ENCODE measurements at regions of chr5 and their contacts with region 1.

Region 1: DNA sequence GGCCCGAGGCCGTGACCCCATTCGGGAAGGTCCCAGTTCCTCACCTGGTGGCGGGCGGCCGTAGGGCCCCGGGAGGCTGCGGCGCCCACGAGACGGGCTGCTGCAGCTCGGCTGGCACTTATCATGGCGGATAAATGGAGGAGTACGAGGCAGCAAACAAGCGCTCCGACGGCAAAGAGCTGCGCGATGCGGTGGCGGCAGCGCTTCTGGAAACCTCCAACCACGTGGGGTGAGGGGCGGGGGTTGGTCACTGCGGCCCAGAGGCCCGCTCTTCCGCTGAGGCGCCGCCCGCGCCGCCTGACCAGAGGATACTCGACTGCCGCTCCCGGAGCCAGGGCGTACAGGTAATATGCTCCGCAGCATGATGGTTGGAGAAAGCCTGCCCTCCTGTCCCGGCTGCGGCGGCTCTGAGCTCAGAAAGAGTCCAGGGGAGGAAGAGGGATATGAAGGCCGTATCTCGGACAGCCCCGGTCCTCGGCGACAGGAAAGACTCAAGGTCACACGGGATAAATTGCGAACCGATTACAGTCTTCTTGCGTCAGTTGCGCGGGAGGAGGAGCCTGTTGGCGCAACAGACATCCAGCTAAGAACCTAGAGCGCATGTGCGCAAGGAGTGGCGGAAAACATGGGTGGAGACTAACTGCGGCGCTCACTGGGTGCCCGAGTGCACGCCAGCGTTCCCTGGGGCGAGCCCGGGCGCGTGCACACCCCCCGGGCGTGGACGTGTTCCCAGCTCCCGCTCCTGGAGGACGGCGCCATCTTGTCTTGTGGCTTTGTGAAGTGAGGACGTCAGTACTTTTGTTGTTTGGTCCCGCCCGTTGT is at the start of gene HSPA9:
- DNase-seq: peak; percentile 98
- H3K4me3 Mint-ChIP-seq: peak within 1 kb of the TSS; percentile 99
- H3K27ac Mint-ChIP-seq: peak within 1 kb of the TSS; percentile 98
- H3K4me1 Mint-ChIP-seq: peaks cover 35% of the 10 kb centered on the region
- H3K27me3 Mint-ChIP-seq: no peaks in the 10 kb centered on the region
- total RNA-seq, gene HSPA9: 358 to 368 TPM

Region 2: GRCh38 chr5:137695651-137696428 is 879.6 kb before region 1 on chr5:
- CTCF ChIA-PET with region 1: no interaction called
- POLR2A ChIA-PET with region 1: no interaction called
- intact Hi-C with region 1: no loop called
- DNase-seq: peak; percentile 29
- H3K4me3 Mint-ChIP-seq: peak overlapping the region; percentile 42
- H3K27ac Mint-ChIP-seq: peak overlapping the region; percentile 86
- H3K4me1 Mint-ChIP-seq: peaks cover 41% of the 10 kb centered on the region
- H3K27me3 Mint-ChIP-seq: no peaks in the 10 kb centered on the region

Region 3: GRCh38 chr5:138337685-138338410 is 237.6 kb before region 1 on chr5 and contains the start of gene FAM53C:
- CTCF ChIA-PET with region 1: interaction called, 3 read pairs
- POLR2A ChIA-PET with region 1: no interaction called
- intact Hi-C with region 1: loop called (anchors 1 kb)
- DNase-seq: peak; percentile 94
- H3K4me3 Mint-ChIP-seq: peak within 1 kb of the TSS; percentile 93
- H3K27ac Mint-ChIP-seq: peak within 1 kb of the TSS; percentile 96
- H3K4me1 Mint-ChIP-seq: peaks cover 38% of the 10 kb centered on the region
- H3K27me3 Mint-ChIP-seq: no peaks in the 10 kb centered on the region
- total RNA-seq, gene FAM53C: 17.2 to 19.2 TPM

Region 4: DNA sequence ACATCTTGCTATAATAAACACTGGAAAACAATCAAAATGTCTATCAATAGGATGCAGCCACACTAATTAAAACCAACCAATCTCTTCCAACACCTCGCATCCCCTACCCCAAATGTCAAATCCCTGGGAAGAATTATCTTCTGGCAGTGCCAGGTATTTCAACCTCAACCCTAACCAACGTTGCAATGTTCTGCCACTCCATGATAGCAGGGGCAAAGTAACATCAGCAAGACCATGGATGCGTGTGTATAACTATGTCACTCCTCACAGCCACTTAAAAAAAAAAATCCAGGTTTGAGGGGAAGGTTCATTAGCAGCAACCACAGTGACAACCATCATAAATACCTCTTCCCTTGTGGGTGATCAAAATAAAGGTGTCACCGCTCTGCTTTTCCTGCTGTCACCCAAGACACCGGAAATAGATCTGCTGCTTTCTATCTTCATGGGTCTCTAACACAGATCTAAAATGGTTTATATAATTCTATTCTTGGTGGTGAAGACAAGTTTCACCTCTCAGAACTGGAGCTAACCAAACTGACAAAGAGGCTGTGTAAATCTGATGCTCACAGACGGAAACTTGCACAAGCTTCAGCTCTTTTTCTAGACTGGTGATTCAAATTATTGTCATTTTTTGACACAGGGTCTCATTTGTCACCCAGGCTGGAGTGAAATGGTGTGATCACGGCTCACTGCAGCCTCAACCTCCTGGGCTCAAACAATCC is 10.1 kb before region 1 on chr5:
- CTCF ChIA-PET with region 1: interaction called, 11 read pairs
- POLR2A ChIA-PET with region 1: interaction called, 16 read pairs
- intact Hi-C with region 1: loop called (anchors 1 kb)
- DNase-seq: peak; percentile 50
- H3K4me3 Mint-ChIP-seq: no peak overlapping the region
- H3K27ac Mint-ChIP-seq: peak overlapping the region; percentile 93
- H3K4me1 Mint-ChIP-seq: peaks cover 74% of the 10 kb centered on the region
- H3K27me3 Mint-ChIP-seq: no peaks in the 10 kb centered on the region

Region 5: GRCh38 chr5:138654281-138654867 is 79.0 kb after region 1 on chr5:
- CTCF ChIA-PET with region 1: no interaction called
- POLR2A ChIA-PET with region 1: no interaction called
- intact Hi-C with region 1: loop called (anchors 5 kb)
- DNase-seq: peak; percentile 83
- H3K4me3 Mint-ChIP-seq: peak overlapping the region; percentile 16
- H3K27ac Mint-ChIP-seq: peak overlapping the region; percentile 26
- H3K4me1 Mint-ChIP-seq: peaks cover 23% of the 10 kb centered on the region
- H3K27me3 Mint-ChIP-seq: peaks cover 74% of the 10 kb centered on the region

Region 6: GRCh38 chr5:139273572-139274289 is 698.3 kb after region 1 on chr5:
- CTCF ChIA-PET with region 1: interaction called, 4 read pairs
- POLR2A ChIA-PET with region 1: interaction called, 3 read pairs
- intact Hi-C with region 1: loop called (anchors 1 kb)
- DNase-seq: peak; percentile 93
- H3K4me3 Mint-ChIP-seq: peak overlapping the region; percentile 96
- H3K27ac Mint-ChIP-seq: peak overlapping the region; percentile 89
- H3K4me1 Mint-ChIP-seq: peaks cover 60% of the 10 kb centered on the region
- H3K27me3 Mint-ChIP-seq: peaks cover 2% of the 10 kb centered on the region

Region 7: GRCh38 chr5:139439013-139439903 is 863.9 kb after region 1 on chr5 and contains the start of gene DNAJC18:
- CTCF ChIA-PET with region 1: no interaction called
- POLR2A ChIA-PET with region 1: no interaction called
- intact Hi-C with region 1: loop called (anchors 2 kb)
- DNase-seq: peak; percentile 96
- H3K4me3 Mint-ChIP-seq: peak within 1 kb of the TSS; percentile 98
- H3K27ac Mint-ChIP-seq: peak within 1 kb of the TSS; percentile 99
- H3K4me1 Mint-ChIP-seq: peaks cover 62% of the 10 kb centered on the region
- H3K27me3 Mint-ChIP-seq: no peaks in the 10 kb centered on the region
- total RNA-seq, gene DNAJC18: 54.1 to 56.0 TPM

Measured in activated CD4-positive, alpha-beta memory T cell treated with anti-CD3 and anti-CD28 coated beads for 36 hours (primary cell).